Caco-2 (cell line): ENCODE measurements at regions of chr5 and their contacts with region 1.

Region 1: GRCh38 chr5:172902497-172903200 is 56.6 kb upstream of the RPL26L1 start:
- DNase-seq: peak; percentile 91 to 97
- H3K4me3 ChIP-seq: no peak overlapping the region
- H3K4me3 Mint-ChIP-seq: peak overlapping the region; percentile 52
- H3K27ac Mint-ChIP-seq: peak overlapping the region; percentile 91
- H3K4me1 ChIP-seq: peaks cover 70% of the 10 kb centered on the region
- H3K4me1 Mint-ChIP-seq: peaks cover 50% of the 10 kb centered on the region
- H3K27me3 ChIP-seq: no peaks in the 10 kb centered on the region
- H3K27me3 Mint-ChIP-seq: no peaks in the 10 kb centered on the region
- CTCF ChIP-seq: peak; percentile 56 to 95

Region 2: DNA sequence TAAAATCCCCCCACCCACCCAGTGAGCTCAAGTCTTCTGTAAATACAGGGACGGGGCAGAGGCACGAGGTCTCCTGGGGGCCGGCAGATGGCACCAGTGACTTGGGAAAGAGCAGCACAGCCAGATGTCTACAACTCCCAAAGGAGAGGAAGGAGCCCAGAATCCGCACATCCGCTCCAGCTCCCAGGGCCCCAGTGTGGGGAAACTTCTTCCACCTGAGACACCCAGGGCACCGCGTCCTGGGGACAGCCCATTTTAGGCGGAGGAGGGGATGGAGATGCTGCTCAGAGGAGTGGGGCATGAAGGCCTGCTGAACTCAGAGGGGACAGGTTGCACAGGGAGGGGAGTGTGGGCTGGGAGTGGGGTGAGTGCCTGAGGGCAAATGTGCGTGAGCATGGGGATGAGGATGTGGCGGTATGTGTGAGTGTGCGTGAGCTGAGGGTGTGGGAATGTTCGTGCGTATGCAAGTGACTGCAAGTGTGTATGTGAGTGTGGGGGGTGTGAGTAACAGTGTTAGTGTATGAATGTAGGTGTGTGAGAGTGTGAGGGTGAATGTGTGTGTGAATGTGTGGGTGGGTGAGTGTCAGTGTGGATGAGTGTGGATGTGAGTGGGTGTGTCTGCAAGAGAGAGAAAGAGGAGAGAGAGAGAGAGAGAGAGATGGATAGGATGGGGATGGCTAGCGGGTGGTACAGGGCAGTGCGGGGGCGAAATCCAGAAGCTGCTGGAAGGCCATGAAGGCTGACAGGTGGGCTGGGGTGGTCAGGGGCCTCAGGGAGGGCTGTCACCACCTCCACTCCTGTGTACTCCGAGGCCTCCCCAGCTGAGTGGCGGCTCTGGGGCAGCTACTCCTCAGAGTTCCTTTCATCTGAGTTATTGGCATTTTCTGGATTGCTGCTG is 195.1 kb before region 1 on chr5:
- CTCF ChIA-PET with region 1: interaction called, 13 read pairs
- POLR2A ChIA-PET with region 1: no interaction called
- intact Hi-C with region 1: no loop called
- DNase-seq: peak; percentile 73 to 75
- H3K4me3 ChIP-seq: no peak overlapping the region
- H3K4me3 Mint-ChIP-seq: no peak overlapping the region
- H3K27ac Mint-ChIP-seq: no peak overlapping the region
- H3K4me1 ChIP-seq: no peaks in the 10 kb centered on the region
- H3K4me1 Mint-ChIP-seq: no peaks in the 10 kb centered on the region
- H3K27me3 ChIP-seq: no peaks in the 10 kb centered on the region
- H3K27me3 Mint-ChIP-seq: no peaks in the 10 kb centered on the region
- CTCF ChIP-seq: peak; percentile 59 to 86

Region 3: GRCh38 chr5:172764849-172765765 is 137.5 kb before region 1 on chr5:
- CTCF ChIA-PET with region 1: interaction called, 8 read pairs
- POLR2A ChIA-PET with region 1: interaction called, 8 read pairs
- intact Hi-C with region 1: loop called (anchors 1 kb)
- DNase-seq: peak; percentile 97 to 98
- H3K4me3 ChIP-seq: peak overlapping the region; percentile 31
- H3K4me3 Mint-ChIP-seq: peak overlapping the region; percentile 76
- H3K27ac Mint-ChIP-seq: peak overlapping the region; percentile 96
- H3K4me1 ChIP-seq: peaks cover 24% of the 10 kb centered on the region
- H3K4me1 Mint-ChIP-seq: peaks cover 28% of the 10 kb centered on the region
- H3K27me3 ChIP-seq: no peaks in the 10 kb centered on the region
- H3K27me3 Mint-ChIP-seq: no peaks in the 10 kb centered on the region
- CTCF ChIP-seq: no peak

Region 4: GRCh38 chr5:172833686-172834414 is 68.8 kb before region 1 on chr5 and contains the start of gene ERGIC1:
- CTCF ChIA-PET with region 1: interaction called, 3 read pairs
- POLR2A ChIA-PET with region 1: no interaction called
- intact Hi-C with region 1: loop called (anchors 1 kb)
- DNase-seq: peak; percentile 88 to 90
- H3K4me3 ChIP-seq: peak within 1 kb of the TSS; percentile 86
- H3K4me3 Mint-ChIP-seq: peak within 1 kb of the TSS; percentile 88
- H3K27ac Mint-ChIP-seq: peak within 1 kb of the TSS; percentile 88
- H3K4me1 ChIP-seq: peaks cover 25% of the 10 kb centered on the region
- H3K4me1 Mint-ChIP-seq: peaks cover 21% of the 10 kb centered on the region
- H3K27me3 ChIP-seq: no peaks in the 10 kb centered on the region
- H3K27me3 Mint-ChIP-seq: no peaks in the 10 kb centered on the region
- CTCF ChIP-seq: no peak
- total RNA-seq, gene ERGIC1: 152 and 161 TPM in 2 replicates

Region 5: GRCh38 chr5:172849606-172850453 is 52.8 kb before region 1 on chr5:
- CTCF ChIA-PET with region 1: no interaction called
- POLR2A ChIA-PET with region 1: no interaction called
- intact Hi-C with region 1: no loop called
- DNase-seq: no peak
- H3K4me3 ChIP-seq: no peak overlapping the region
- H3K4me3 Mint-ChIP-seq: no peak overlapping the region
- H3K27ac Mint-ChIP-seq: no peak overlapping the region
- H3K4me1 ChIP-seq: peaks cover 22% of the 10 kb centered on the region
- H3K4me1 Mint-ChIP-seq: peaks cover 27% of the 10 kb centered on the region
- H3K27me3 ChIP-seq: no peaks in the 10 kb centered on the region
- H3K27me3 Mint-ChIP-seq: no peaks in the 10 kb centered on the region
- CTCF ChIP-seq: no peak

Region 6: DNA sequence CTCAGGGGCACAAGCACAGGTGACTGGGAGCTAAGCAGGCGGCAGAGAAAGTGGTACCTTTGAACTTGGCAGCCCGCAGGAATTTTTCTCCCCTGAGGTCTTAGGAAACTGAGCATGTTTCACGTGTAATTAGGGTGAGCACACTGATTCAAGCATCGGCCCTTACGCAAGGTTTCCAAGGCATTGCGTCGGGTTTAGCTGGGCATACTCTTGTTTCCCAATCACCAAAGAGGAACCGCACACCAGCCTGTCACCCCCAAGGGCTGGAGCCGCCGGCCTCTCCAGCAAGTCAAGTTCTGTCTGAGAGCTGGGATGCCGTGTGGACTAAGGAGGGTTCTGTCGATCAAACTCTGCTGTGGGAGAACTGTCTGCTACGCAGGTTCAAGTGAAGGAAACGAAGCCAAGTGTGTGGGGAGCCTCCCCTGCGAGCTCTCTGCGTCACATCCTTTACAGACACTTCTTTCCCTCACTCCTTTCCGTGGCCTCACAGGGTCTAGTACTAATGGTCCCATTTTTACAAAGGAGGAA is 15.6 kb before region 1 on chr5:
- CTCF ChIA-PET with region 1: interaction called, 3 read pairs
- POLR2A ChIA-PET with region 1: interaction called, 3 read pairs
- intact Hi-C with region 1: loop called (anchors 2 kb)
- DNase-seq: peak; percentile 65 to 69
- H3K4me3 ChIP-seq: no peak overlapping the region
- H3K4me3 Mint-ChIP-seq: no peak overlapping the region
- H3K27ac Mint-ChIP-seq: peak overlapping the region; percentile 40
- H3K4me1 ChIP-seq: peaks cover 14% of the 10 kb centered on the region
- H3K4me1 Mint-ChIP-seq: peaks cover 19% of the 10 kb centered on the region
- H3K27me3 ChIP-seq: no peaks in the 10 kb centered on the region
- H3K27me3 Mint-ChIP-seq: no peaks in the 10 kb centered on the region
- CTCF ChIP-seq: no peak